ENCODE measurements at regions of chr2 and their contacts with region 1.

Region 1: GRCh38 chr2:30231212-30231995 is at the start of gene LBH:
- DNase-seq: peak; percentile 61 to 96
- H3K4me3 ChIP-seq: peak within 1 kb of the TSS; percentile 83
- H3K27ac ChIP-seq: peak within 1 kb of the TSS; percentile 82 to 93
- H3K4me1 ChIP-seq: peaks cover under 1 to 30% of the 10 kb centered on the region in 2 donors
- H3K27me3 ChIP-seq: no peaks in the 10 kb centered on the region
- CTCF ChIP-seq: peak in 2 of 3 experiments; percentile 2 to 4
- total RNA-seq, gene LBH: 116 TPM

Region 2: DNA sequence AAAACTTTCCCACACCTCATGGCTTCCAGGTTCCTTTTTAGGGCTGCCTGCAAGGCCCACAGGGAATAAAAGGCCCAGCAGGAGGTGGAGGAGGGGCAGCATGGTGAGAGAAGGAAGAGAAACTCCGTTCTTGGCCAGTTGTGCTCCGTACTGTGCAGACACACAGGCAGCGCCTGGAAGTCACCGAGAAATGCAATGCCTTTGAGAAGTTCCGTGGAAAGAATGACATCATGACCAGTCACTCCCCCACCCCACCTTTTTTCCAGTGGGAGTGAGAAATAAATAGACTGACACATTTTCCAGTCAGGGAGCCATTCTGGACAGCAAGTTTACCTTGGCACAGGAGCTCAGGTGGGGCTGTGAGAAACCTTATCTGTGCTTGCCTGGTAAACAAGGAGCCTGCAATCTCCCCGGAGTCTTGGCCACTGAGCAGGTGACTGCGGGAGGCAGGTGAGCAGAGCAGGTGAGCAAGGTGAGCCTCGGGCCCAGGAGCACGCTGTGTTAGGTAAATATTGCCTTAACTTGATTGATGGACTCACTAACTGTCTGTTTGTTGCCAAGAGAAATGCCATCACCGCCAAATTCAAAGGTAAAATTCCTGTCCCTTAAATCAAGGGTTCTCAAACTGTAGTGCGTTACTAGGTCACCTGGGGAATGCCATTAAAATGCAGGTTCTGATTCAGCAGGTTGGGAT is 13.6 kb before region 1 on chr2:
- intact Hi-C with region 1: loop called (anchors 1 kb)
- DNase-seq: peak; percentile 57 to 90
- H3K4me3 ChIP-seq: peak overlapping the region in 1 of 2 donors; percentile 15
- H3K27ac ChIP-seq: peak overlapping the region; percentile 73 to 82
- H3K4me1 ChIP-seq: peaks cover 6 to 23% of the 10 kb centered on the region in 2 donors
- H3K27me3 ChIP-seq: no peaks in the 10 kb centered on the region
- CTCF ChIP-seq: no peak

Region 3: GRCh38 chr2:30273261-30273861 is 42.0 kb after region 1 on chr2:
- intact Hi-C with region 1: loop called (anchors 5 kb)
- DNase-seq: no peak
- H3K4me3 ChIP-seq: no peak overlapping the region
- H3K27ac ChIP-seq: peak overlapping the region; percentile 53 to 70
- H3K4me1 ChIP-seq: peaks cover 5 to 28% of the 10 kb centered on the region in 2 donors
- H3K27me3 ChIP-seq: no peaks in the 10 kb centered on the region
- CTCF ChIP-seq: no peak

Region 4: DNA sequence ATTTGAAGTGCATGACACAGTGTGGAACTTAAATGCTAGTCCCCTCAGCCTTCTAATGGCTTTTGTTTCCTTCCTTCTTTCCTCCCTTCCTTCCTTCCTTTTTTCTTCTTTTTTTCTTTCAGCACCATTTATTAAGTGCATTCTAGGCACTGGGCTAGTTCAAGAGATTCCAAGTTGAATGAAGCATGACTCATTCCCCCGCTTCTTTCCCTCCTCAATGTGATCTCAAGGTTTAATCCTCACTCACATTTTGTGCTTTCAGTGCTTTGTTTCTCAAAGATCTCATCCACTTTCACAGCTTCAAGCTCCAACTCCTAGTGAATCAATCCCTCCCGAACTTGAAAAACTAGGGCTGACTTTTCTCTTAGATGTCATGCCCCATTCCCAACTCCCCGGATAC is 90.1 kb after region 1 on chr2:
- intact Hi-C with region 1: no loop called
- DNase-seq: no peak
- H3K4me3 ChIP-seq: no peak overlapping the region
- H3K27ac ChIP-seq: no peak overlapping the region
- H3K4me1 ChIP-seq: peaks cover 0 to 3% of the 10 kb centered on the region in 2 donors
- H3K27me3 ChIP-seq: no peaks in the 10 kb centered on the region
- CTCF ChIP-seq: no peak

Region 5: GRCh38 chr2:30404319-30404953 is 173.0 kb after region 1 on chr2:
- intact Hi-C with region 1: loop called (anchors 5 kb)
- DNase-seq: no peak
- H3K4me3 ChIP-seq: no peak overlapping the region
- H3K27ac ChIP-seq: no peak overlapping the region
- H3K4me1 ChIP-seq: peaks cover 14 to 37% of the 10 kb centered on the region in 2 donors
- H3K27me3 ChIP-seq: no peaks in the 10 kb centered on the region
- CTCF ChIP-seq: no peak

Region 6: GRCh38 chr2:30475542-30475941 is 244.1 kb after region 1 on chr2:
- intact Hi-C with region 1: loop called (anchors 5 kb)
- DNase-seq: no peak
- H3K4me3 ChIP-seq: no peak overlapping the region
- H3K27ac ChIP-seq: no peak overlapping the region
- H3K4me1 ChIP-seq: peaks cover 0 to 4% of the 10 kb centered on the region in 2 donors
- H3K27me3 ChIP-seq: no peaks in the 10 kb centered on the region
- CTCF ChIP-seq: peak in 2 of 3 experiments; percentile 12 to 49

Measured in ascending aorta (tissue), 2 donors.